ENCODE measurements at regions of chr17 and their contacts with region 1.

Region 1: GRCh38 chr17:60599620-60600489 is at the start of gene PPM1D:
- DNase-seq: peak; percentile 99
- ATAC-seq: peak; percentile 95
- H3K4me3 Mint-ChIP-seq: peak within 1 kb of the TSS; percentile 92
- H3K27ac Mint-ChIP-seq: peak within 1 kb of the TSS; percentile 96
- H3K4me1 Mint-ChIP-seq: peaks cover 39% of the 10 kb centered on the region
- H3K27me3 Mint-ChIP-seq: peaks cover 2% of the 10 kb centered on the region
- total RNA-seq, gene PPM1D: 20.4 to 21.2 TPM

Region 2: GRCh38 chr17:60392042-60392844 is 207.6 kb before region 1 on chr17 and contains the start of gene USP32:
- CTCF ChIA-PET with region 1: no interaction called
- POLR2A ChIA-PET with region 1: interaction called, 13 read pairs
- DNase-seq: peak; percentile 99
- ATAC-seq: peak; percentile 89
- H3K4me3 Mint-ChIP-seq: peak within 1 kb of the TSS; percentile 94
- H3K27ac Mint-ChIP-seq: peak within 1 kb of the TSS; percentile 99
- H3K4me1 Mint-ChIP-seq: peaks cover 49% of the 10 kb centered on the region
- H3K27me3 Mint-ChIP-seq: no peaks in the 10 kb centered on the region
- total RNA-seq, gene USP32: 36.7 to 44.0 TPM

Region 3: DNA sequence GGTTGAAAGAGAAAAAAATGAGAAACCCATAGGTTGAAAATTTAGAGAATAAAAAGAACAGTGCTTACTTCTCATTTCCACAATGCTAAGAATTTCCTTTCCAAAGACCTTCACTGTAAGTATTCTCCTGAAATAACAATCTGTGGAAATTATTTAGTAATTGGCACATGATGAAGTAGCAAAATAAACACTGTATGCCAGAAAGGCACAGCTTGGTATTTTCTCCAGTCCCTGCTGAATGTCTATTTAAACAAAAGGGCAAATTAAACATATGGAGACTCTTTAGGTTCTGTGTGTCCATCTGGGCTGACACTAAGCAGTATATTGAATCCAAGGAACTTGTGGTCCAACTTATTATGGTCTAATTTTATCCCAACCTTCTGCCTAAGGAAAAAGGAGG is 131.5 kb before region 1 on chr17:
- CTCF ChIA-PET with region 1: no interaction called
- POLR2A ChIA-PET with region 1: no interaction called
- DNase-seq: no peak
- ATAC-seq: no peak
- H3K4me3 Mint-ChIP-seq: no peak overlapping the region
- H3K27ac Mint-ChIP-seq: no peak overlapping the region
- H3K4me1 Mint-ChIP-seq: peaks cover 6% of the 10 kb centered on the region
- H3K27me3 Mint-ChIP-seq: no peaks in the 10 kb centered on the region